ENCODE measurements at regions of chr11 and their contacts with region 1.

Region 1: GRCh38 chr11:925496-926321 is at the start of gene AP2A2:
- DNase-seq: peak; percentile 93
- H3K4me3 ChIP-seq: peak within 1 kb of the TSS; percentile 84 to 96 (median 90)
- H3K27ac ChIP-seq: peak within 1 kb of the TSS; percentile 94 to 95 (median 95)
- H3K4me1 ChIP-seq: peaks cover 0 to 43% (median 25%) of the 10 kb centered on the region in 4 donors
- H3K27me3 ChIP-seq: no peaks in the 10 kb centered on the region
- CTCF ChIP-seq: peak; percentile 29 to 74 (median 62)
- EP300 ChIP-seq: no peak
- POLR2A ChIP-seq: no peak
- total RNA-seq, gene AP2A2: 42.6 to 78.4 (median 53.1) TPM

Region 2: DNA sequence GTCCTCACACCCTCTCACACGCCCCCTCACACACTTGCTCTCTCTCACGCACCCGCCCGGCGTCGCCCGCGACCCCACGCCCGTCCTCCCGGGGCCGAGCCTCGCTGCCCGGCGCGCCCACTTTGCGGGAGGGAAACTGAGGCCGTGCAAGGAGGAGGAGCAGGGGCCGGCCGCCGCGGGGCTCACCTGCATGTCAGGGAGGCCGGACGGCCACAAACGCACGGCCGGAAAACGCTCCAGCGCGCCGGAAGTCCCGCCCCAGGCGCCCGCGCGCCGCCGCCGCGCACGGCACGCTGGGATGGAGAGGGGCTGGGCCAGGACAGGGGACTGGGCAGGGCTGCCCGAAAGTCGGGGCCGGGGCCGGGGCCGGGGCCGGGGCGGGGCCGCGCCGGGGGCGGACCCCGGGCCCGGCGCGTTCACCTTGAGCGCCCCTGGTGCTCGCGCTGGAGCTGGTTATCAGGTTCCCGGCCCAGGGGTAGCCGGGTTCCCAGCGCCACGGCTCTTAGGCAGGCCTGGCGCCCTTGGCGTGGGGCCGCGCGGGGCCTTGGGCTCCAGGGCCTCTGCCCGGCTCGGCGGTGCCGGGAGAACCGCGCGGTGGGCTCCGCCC is 15.0 kb before region 1 on chr11 and contains the start of gene CHID1:
- intact Hi-C with region 1: loop called (anchors 2 kb)
- DNase-seq: peak; percentile 90
- H3K4me3 ChIP-seq: peak within 1 kb of the TSS; percentile 73 to 93 (median 82)
- H3K27ac ChIP-seq: peak within 1 kb of the TSS; percentile 91 to 96 (median 94)
- H3K4me1 ChIP-seq: peaks cover 0 to 27% (median 18%) of the 10 kb centered on the region in 4 donors
- H3K27me3 ChIP-seq: no peaks in the 10 kb centered on the region
- CTCF ChIP-seq: no peak
- EP300 ChIP-seq: no peak
- POLR2A ChIP-seq: no peak
- total RNA-seq, gene CHID1: 45.7 to 52.3 (median 48.0) TPM

Measured in sigmoid colon (tissue), 7 donors.